ENCODE measurements at regions of chr10 and their contacts with region 1.

Region 1: GRCh38 chr10:114526504-114527238 is 122.4 kb upstream of the AFAP1L2 start:
- DNase-seq: peak; percentile 95
- H3K4me3 Mint-ChIP-seq: peak overlapping the region; percentile 94
- H3K27ac Mint-ChIP-seq: peak overlapping the region; percentile 99
- H3K4me1 Mint-ChIP-seq: peaks cover 47% of the 10 kb centered on the region
- H3K27me3 Mint-ChIP-seq: no peaks in the 10 kb centered on the region

Region 2: GRCh38 chr10:113960617-113961181 is 566.0 kb before region 1 on chr10:
- CTCF ChIA-PET with region 1: no interaction called
- intact Hi-C with region 1: loop called (anchors 5 kb)
- DNase-seq: peak; percentile 39
- H3K4me3 Mint-ChIP-seq: no peak overlapping the region
- H3K27ac Mint-ChIP-seq: no peak overlapping the region
- H3K4me1 Mint-ChIP-seq: peaks cover 37% of the 10 kb centered on the region
- H3K27me3 Mint-ChIP-seq: peaks cover 7% of the 10 kb centered on the region

Region 3: GRCh38 chr10:114470956-114471905 is 55.4 kb before region 1 on chr10:
- CTCF ChIA-PET with region 1: interaction called, 23 read pairs
- intact Hi-C with region 1: loop called (anchors 1 kb)
- DNase-seq: peak; percentile 79
- H3K4me3 Mint-ChIP-seq: no peak overlapping the region
- H3K27ac Mint-ChIP-seq: peak overlapping the region; percentile 44
- H3K4me1 Mint-ChIP-seq: peaks cover 22% of the 10 kb centered on the region
- H3K27me3 Mint-ChIP-seq: no peaks in the 10 kb centered on the region

Region 4: GRCh38 chr10:114492351-114493037 is 34.2 kb before region 1 on chr10:
- CTCF ChIA-PET with region 1: interaction called, 36 read pairs
- intact Hi-C with region 1: loop called (anchors 1 kb)
- DNase-seq: peak; percentile 70
- H3K4me3 Mint-ChIP-seq: peak overlapping the region; percentile 30
- H3K27ac Mint-ChIP-seq: peak overlapping the region; percentile 77
- H3K4me1 Mint-ChIP-seq: peaks cover 84% of the 10 kb centered on the region
- H3K27me3 Mint-ChIP-seq: no peaks in the 10 kb centered on the region

Region 5: DNA sequence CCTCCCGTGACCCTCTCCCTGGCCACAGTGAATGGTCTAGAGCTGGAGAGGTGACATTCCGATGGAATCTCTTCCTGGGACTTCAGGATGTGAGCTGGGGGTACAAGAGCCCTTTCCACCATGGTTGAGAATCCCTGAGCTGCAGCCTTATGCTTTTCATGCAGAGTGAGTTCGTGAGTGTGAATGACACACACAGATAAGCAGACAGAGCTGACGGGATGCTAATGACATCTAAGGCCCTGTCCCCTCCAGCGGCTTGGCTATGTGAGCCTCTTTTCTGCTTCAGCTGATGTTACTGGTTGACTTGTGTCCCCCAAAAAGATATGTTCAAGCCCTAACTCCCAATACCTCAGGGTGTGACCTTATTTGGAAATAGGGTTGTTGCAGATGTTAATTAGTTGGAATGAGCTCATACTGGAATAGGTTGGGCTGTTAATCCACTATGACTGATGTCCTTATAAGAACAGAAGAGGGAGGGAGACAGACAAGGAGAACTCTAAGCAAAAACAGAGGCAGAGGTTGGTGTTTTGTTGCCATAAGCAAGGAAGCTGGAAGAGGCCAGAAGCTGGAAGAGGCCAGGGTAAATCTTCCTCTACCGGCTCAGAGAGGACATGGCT is 11.3 kb before region 1 on chr10:
- CTCF ChIA-PET with region 1: interaction called, 45 read pairs
- intact Hi-C with region 1: loop called (anchors 1 kb)
- DNase-seq: peak; percentile 42
- H3K4me3 Mint-ChIP-seq: peak overlapping the region; percentile 8
- H3K27ac Mint-ChIP-seq: peak overlapping the region; percentile 80
- H3K4me1 Mint-ChIP-seq: peaks cover 90% of the 10 kb centered on the region
- H3K27me3 Mint-ChIP-seq: no peaks in the 10 kb centered on the region

Region 6: DNA sequence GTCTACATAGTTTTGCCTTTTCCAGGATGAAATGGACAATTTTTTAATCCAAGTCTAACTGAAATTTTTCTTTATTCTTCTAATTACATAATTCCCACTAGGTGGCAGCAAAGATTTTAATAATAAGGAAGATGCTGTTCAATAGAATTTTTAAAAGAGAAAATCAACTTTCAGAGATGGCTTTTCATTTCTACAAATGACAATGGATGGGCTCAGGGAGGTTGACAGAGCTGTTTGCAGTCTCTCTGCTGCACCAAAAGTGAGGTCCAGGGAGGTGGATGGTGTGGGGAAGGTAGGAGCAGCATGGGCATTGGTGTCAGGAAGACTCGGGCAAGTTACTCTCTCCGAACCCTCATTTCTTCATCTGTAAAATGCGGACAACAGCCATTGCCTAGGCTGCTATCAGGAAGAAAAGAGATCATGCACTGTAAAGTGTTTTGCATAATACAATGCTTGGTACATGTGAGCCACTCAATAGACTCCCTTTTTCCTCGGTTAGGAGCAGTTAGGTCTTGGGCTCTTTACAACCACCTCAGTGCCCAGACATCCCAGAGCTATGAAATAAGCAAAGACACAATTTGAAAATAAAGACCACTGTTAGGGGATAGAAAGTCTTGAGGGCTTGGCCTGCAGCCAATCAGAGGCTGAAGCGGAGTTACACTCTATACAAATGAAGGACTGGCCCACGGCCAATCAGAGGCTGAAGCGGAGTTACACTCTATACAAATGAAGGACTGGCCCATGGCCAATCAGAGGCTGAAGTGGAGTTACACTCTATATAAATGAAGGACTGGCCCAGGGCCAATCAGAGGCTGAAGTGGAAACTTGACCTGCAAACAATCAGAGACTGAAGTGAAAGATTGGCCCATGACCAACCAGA is 24.3 kb after region 1 on chr10:
- CTCF ChIA-PET with region 1: interaction called, 307 read pairs
- intact Hi-C with region 1: no loop called
- DNase-seq: no peak
- H3K4me3 Mint-ChIP-seq: no peak overlapping the region
- H3K27ac Mint-ChIP-seq: no peak overlapping the region
- H3K4me1 Mint-ChIP-seq: peaks cover 18% of the 10 kb centered on the region
- H3K27me3 Mint-ChIP-seq: no peaks in the 10 kb centered on the region

Measured in activated naive CD4-positive, alpha-beta T cell treated with anti-CD3 and anti-CD28 coated beads for 36 hours (primary cell).